ENCODE measurements at regions of chr6 and their contacts with region 1.

Region 1: DNA sequence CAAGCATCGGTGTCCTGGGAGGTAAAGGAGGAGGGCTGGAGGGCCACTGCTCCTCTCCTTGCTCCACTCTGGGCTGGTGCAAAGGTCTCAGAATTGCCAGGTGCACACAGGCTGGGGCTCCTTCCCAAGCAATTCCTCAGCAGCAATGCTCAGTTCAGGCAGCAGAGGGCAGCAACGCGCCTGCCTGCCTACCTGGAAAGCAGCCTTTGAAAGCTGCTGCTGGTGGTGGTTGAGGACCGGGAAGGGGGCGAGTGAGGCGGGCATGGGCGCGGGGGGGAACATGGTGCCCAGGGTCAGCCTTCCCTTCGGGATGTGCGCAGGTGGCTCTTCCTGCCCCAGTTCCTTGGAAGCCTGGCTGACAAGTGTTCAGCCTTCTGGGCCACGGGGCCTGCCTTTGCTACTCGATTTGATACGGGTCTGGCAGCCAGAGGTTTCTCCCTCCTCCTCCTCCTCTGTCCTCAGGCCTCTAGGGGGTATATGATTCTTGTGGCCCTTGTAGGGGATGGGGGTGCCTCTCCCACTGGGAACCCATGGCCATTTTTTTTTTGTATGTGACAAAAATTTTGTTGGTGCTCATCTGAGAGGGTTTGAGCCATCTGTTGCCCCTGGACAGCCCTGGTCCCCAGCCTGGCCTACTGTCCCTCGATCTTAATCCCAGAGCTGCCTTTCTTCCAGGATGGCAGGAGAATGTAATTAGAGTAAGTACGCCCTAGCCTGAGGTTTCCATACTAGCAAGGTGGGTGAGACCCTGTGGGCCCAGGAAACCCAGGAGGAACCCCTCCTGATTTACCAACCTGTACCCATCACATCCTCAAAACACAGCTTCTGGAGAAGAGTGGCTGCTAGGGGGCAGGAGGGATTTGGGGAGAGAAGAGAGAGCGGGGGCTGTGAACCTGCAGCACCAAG is 20.1 kb downstream of the MRPS18A start:
- DNase-seq: peak; percentile 86
- ATAC-seq: peak; percentile 78
- H3K4me3 ChIP-seq: no peak overlapping the region
- H3K4me3 Mint-ChIP-seq: peak overlapping the region; percentile 61
- H3K27ac ChIP-seq: no peak overlapping the region
- H3K27ac Mint-ChIP-seq: peak overlapping the region; percentile 70
- H3K4me1 ChIP-seq: peaks cover 13 to 15% of the 10 kb centered on the region in 2 donors
- H3K4me1 Mint-ChIP-seq: peaks cover 19% of the 10 kb centered on the region
- H3K27me3 ChIP-seq: no peaks in the 10 kb centered on the region
- H3K27me3 Mint-ChIP-seq: no peaks in the 10 kb centered on the region
- CTCF ChIP-seq: peak; percentile 95

Region 2: DNA sequence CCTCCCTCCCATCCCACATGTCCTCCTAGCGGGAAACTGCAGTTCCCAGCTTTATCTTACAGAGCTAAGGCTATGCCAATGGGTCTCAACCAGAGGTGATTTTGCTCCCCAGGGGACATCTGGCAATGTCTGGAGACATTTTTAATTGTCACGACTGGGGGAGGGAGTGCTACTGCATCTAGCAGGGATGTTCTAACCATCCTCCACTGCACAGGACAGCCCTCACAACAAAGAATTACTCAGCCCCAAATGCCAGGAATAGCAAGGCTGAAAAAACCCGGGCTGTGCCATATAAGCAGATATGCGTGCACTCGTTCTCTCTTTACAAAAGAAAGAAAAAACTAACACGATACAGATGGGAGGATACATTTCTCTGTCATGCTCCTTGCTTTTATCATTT is 11.6 kb after region 1 on chr6:
- CTCF ChIA-PET with region 1: interaction called, 20 read pairs
- POLR2A ChIA-PET with region 1: no interaction called
- intact Hi-C with region 1: no loop called
- DNase-seq: no peak
- ATAC-seq: no peak
- H3K4me3 ChIP-seq: no peak overlapping the region
- H3K4me3 Mint-ChIP-seq: no peak overlapping the region
- H3K27ac ChIP-seq: no peak overlapping the region
- H3K27ac Mint-ChIP-seq: no peak overlapping the region
- H3K4me1 ChIP-seq: peaks cover 10 to 11% of the 10 kb centered on the region in 2 donors
- H3K4me1 Mint-ChIP-seq: peaks cover 19% of the 10 kb centered on the region
- H3K27me3 ChIP-seq: no peaks in the 10 kb centered on the region
- H3K27me3 Mint-ChIP-seq: no peaks in the 10 kb centered on the region
- CTCF ChIP-seq: no peak

Region 3: DNA sequence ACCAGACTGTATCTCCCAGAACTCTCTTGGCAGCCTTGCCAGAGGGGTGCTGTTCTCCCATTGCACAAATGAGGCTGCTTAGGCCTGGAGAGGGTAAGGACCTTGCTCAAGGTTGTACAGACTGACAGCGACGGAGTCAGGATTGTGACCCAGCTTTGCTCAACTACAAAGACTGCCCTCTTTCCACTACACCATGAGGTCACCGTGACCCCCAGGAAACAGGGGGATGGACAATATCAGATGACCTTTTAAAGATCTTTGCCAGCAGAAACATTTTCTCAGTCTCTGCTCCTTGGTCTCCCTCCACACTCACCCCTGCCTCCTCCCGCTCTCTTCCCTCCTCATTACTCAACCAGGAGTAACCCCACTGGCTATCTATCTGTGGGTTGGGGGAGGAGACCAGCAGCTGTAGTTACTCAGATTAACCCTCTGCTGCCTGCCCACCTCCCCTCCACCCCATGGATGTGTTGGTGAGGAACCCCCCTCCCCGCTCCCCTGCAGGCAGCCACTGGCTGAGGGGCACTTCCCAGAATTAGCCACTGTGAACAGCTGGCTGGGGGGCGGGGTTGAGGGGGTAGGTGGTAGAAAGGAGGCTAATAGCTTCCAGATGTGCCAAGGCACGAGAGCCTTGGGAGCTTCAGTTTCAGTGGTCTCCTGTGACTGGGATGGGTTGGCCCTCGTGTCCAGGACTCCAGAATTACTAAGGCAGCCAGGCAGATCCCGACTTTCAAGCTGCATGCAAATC is 47.0 kb after region 1 on chr6:
- CTCF ChIA-PET with region 1: interaction called, 19 read pairs
- POLR2A ChIA-PET with region 1: no interaction called
- intact Hi-C with region 1: no loop called
- DNase-seq: no peak
- ATAC-seq: peak; percentile 38
- H3K4me3 ChIP-seq: peak overlapping the region in 3 of 5 experiments; percentile 4 to 34 (median 33)
- H3K4me3 Mint-ChIP-seq: peak overlapping the region; percentile 60
- H3K27ac ChIP-seq: peak overlapping the region; percentile 60 to 71
- H3K27ac Mint-ChIP-seq: peak overlapping the region; percentile 80
- H3K4me1 ChIP-seq: peaks cover 39 to 51% of the 10 kb centered on the region in 2 donors
- H3K4me1 Mint-ChIP-seq: peaks cover 46% of the 10 kb centered on the region
- H3K27me3 ChIP-seq: peaks cover 0 to 8% (median 2%) of the 10 kb centered on the region in 4 experiments
- H3K27me3 Mint-ChIP-seq: no peaks in the 10 kb centered on the region
- CTCF ChIP-seq: no peak

Region 4: DNA sequence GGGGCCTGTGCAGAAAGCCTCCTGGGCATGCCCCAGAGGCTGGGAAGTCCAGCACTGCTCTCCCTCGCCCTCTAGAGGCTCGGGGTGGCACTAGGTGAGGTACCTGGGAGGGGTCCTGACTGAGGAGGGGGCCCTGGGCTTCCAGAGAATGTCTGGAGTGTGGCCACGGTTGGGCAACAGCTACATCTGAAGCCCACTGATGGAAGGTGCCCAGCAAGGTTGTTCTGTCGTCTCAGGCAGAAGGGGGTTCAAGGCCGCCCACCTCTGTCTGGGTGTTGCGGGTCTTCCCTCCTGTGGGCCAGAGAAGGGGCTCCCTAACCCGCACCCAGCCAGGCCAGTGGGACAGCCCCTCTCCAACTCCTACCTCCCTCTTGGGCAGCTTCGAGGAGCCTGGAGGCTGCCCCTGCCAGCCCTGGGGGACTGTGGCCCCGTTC is 91.1 kb after region 1 on chr6:
- CTCF ChIA-PET with region 1: interaction called, 35 read pairs
- POLR2A ChIA-PET with region 1: no interaction called
- intact Hi-C with region 1: no loop called
- DNase-seq: peak; percentile 34
- ATAC-seq: peak; percentile 66
- H3K4me3 ChIP-seq: no peak overlapping the region
- H3K4me3 Mint-ChIP-seq: no peak overlapping the region
- H3K27ac ChIP-seq: no peak overlapping the region
- H3K27ac Mint-ChIP-seq: no peak overlapping the region
- H3K4me1 ChIP-seq: no peaks in the 10 kb centered on the region
- H3K4me1 Mint-ChIP-seq: peaks cover 3% of the 10 kb centered on the region
- H3K27me3 ChIP-seq: peaks cover 0 to 3% (median 0%) of the 10 kb centered on the region in 4 experiments
- H3K27me3 Mint-ChIP-seq: peaks cover 18% of the 10 kb centered on the region
- CTCF ChIP-seq: peak; percentile 66

Region 5: GRCh38 chr6:43774776-43775534 is 107.5 kb after region 1 on chr6:
- CTCF ChIA-PET with region 1: interaction called, 59 read pairs
- POLR2A ChIA-PET with region 1: no interaction called
- intact Hi-C with region 1: loop called (anchors 1 kb)
- DNase-seq: peak; percentile 78
- ATAC-seq: peak; percentile 22
- H3K4me3 ChIP-seq: no peak overlapping the region
- H3K4me3 Mint-ChIP-seq: peak overlapping the region; percentile 19
- H3K27ac ChIP-seq: no peak overlapping the region
- H3K27ac Mint-ChIP-seq: no peak overlapping the region
- H3K4me1 ChIP-seq: peaks cover 21 to 31% of the 10 kb centered on the region in 2 donors
- H3K4me1 Mint-ChIP-seq: peaks cover 35% of the 10 kb centered on the region
- H3K27me3 ChIP-seq: peaks cover 0 to 36% (median 15%) of the 10 kb centered on the region in 4 experiments
- H3K27me3 Mint-ChIP-seq: peaks cover 19% of the 10 kb centered on the region
- CTCF ChIP-seq: peak; percentile 84

Region 6: GRCh38 chr6:43786664-43787329 is 119.3 kb after region 1 on chr6:
- CTCF ChIA-PET with region 1: no interaction called
- POLR2A ChIA-PET with region 1: no interaction called
- intact Hi-C with region 1: no loop called
- DNase-seq: no peak
- ATAC-seq: no peak
- H3K4me3 ChIP-seq: no peak overlapping the region
- H3K4me3 Mint-ChIP-seq: no peak overlapping the region
- H3K27ac ChIP-seq: no peak overlapping the region
- H3K27ac Mint-ChIP-seq: no peak overlapping the region
- H3K4me1 ChIP-seq: no peaks in the 10 kb centered on the region
- H3K4me1 Mint-ChIP-seq: no peaks in the 10 kb centered on the region
- H3K27me3 ChIP-seq: no peaks in the 10 kb centered on the region
- H3K27me3 Mint-ChIP-seq: peaks cover 4% of the 10 kb centered on the region
- CTCF ChIP-seq: no peak

Region 7: GRCh38 chr6:44074439-44075136 is 407.1 kb after region 1 on chr6:
- CTCF ChIA-PET with region 1: interaction called, 102 read pairs
- POLR2A ChIA-PET with region 1: interaction called, 3 read pairs
- intact Hi-C with region 1: loop called (anchors 1 kb)
- DNase-seq: peak; percentile 83
- ATAC-seq: peak; percentile 36
- H3K4me3 ChIP-seq: peak overlapping the region in 1 of 5 experiments; percentile 12
- H3K4me3 Mint-ChIP-seq: peak overlapping the region; percentile 95
- H3K27ac ChIP-seq: no peak overlapping the region
- H3K27ac Mint-ChIP-seq: no peak overlapping the region
- H3K4me1 ChIP-seq: peaks cover 19 to 28% of the 10 kb centered on the region in 2 donors
- H3K4me1 Mint-ChIP-seq: peaks cover 17% of the 10 kb centered on the region
- H3K27me3 ChIP-seq: peaks cover 0 to 50% (median 17%) of the 10 kb centered on the region in 4 experiments
- H3K27me3 Mint-ChIP-seq: peaks cover 49% of the 10 kb centered on the region
- CTCF ChIP-seq: peak; percentile 86